Activated CD4-positive, alpha-beta memory T cell treated with anti-CD3 and anti-CD28 coated beads, Interleukin-2, amount 10 ng/mL, durations not matched to agents 7 days and 5 days (primary cell): ENCODE measurements at regions of chr16 and their contacts with region 1.

Region 1: DNA sequence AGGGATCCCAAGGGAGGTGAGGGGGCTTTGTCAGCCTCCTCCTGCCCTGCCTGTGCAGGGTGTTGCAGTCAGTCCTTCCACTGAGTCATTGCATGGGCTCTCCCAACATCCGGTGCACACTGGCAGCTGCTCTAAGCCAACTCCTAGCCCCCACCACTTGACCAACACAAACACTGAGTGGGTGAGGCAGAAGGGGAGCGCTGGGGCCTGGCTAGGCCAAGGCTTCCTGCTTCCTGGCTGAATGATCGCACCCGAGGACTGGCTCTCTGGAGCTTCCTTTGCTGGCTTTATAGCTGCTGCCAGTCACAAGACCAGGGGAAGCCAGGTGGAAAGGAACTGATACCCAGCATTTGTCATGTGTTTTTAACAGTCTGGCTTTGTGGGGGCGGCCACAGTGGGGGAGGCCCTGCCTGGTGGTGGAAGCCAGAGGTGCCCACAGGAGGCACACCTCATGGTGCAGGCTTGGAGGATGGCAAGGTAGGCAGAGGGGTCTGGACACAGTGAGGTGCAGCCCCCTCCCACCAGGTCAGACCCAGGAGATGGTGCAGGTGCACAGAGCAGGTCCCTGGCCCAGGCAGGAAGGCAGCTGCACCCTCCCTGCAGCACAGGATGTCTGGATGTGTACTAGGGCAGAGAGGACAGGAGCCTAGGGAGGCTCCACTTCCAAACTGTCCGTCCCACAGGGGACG is 6.8 kb downstream of the MPG start:
- DNase-seq: peak; percentile 70
- H3K4me3 Mint-ChIP-seq: no peak overlapping the region
- H3K27ac Mint-ChIP-seq: peak overlapping the region; percentile 89
- H3K4me1 Mint-ChIP-seq: peaks cover 24% of the 10 kb centered on the region
- H3K27me3 Mint-ChIP-seq: no peaks in the 10 kb centered on the region

Region 2: DNA sequence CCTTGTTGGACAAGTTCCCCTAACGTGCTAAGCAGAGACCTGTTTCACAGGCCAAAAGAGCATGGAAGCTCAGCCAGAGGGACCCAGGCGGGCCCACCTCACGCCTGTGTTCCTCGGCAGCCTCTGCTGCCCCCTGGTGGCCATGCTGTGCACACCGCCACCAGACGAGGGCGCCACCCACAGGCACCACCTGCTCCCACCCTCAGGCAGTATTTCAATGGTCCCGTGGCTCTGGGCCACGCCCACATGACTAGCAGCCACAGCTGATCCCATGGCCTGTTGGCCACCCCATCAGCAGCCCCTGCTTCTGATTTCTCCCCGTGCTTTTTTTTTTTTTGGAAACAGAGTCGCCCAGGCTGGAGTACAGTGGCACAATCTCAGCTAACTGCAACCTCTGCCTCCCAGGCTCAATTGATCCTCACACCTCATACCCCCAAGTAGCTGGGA is 12.1 kb after region 1 on chr16:
- CTCF ChIA-PET with region 1: interaction called, 16 read pairs
- POLR2A ChIA-PET with region 1: interaction called, 5 read pairs
- DNase-seq: peak; percentile 92
- H3K4me3 Mint-ChIP-seq: no peak overlapping the region
- H3K27ac Mint-ChIP-seq: no peak overlapping the region
- H3K4me1 Mint-ChIP-seq: peaks cover 5% of the 10 kb centered on the region
- H3K27me3 Mint-ChIP-seq: no peaks in the 10 kb centered on the region